Activated CD4-positive, alpha-beta T cell treated with anti-CD3 and anti-CD28 coated beads for 36 hours (primary cell): ENCODE measurements at regions of chr2 and their contacts with region 1.

Region 1: DNA sequence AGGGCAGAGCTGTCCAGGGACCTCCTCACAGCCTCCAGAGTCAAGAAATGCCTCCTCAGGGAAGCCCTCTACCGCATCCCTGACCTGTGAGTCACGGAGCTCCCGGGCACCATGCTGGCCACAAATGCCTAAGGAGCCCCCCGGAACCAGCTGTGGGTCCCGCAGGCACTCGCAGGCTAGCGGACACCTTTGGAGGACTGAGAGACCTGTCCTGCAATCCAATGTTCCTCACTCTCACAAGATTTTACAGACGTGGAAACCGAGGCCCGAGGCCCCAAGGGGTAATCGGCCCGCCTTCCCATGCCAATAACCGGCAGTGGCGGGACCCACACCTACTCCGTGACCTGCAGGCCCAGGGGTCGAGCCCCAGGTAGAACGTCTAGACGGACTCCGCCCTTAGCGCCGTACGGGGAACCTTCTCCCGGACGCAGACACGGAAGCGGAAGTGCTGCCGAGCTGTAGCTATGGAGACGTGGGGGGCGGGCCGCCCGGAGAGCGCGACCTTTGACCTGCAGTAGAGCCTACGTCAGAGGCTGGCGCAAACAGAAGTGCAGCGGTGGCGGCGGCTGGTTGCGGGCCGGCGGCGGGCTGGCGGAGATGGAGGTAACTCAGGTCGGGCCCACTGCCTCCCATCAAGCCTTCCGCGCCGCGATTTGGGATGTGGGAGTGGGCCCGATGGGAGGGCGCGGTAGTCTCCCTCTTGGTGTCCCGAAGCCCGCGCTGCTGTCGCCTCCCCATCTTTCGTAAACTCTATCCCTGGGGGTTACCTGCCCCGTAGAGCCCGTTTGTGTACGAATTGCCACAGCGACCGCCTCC is at the start of gene GCC2:
- DNase-seq: peak; percentile 98
- ATAC-seq: peak; percentile 97
- H3K4me3 Mint-ChIP-seq: peak within 1 kb of the TSS; percentile 98
- H3K27ac Mint-ChIP-seq: peak within 1 kb of the TSS; percentile 94
- H3K4me1 Mint-ChIP-seq: peaks cover 33% of the 10 kb centered on the region
- H3K27me3 Mint-ChIP-seq: no peaks in the 10 kb centered on the region
- total RNA-seq, gene GCC2: 47.8 to 51.3 TPM

Region 2: DNA sequence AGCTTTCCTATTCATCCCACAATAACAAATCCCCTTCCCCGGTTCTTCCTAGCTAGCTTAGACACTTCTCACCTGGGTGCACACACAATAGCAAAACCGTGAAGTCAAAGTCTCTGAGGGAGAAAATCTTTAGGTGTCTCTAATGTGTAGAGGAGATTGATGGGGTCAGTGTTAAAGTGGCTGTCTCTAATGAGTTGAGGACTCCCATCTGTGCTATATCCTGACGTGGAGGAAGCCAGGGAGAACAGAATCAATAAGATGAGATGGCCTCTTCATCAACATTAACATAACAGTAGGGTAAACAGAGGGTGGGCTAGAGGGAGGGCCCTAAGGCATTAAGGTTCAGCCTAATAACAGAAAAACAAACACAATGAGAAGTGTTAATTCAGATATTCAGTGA is 342.2 kb before region 1 on chr2:
- CTCF ChIA-PET with region 1: no interaction called
- POLR2A ChIA-PET with region 1: no interaction called
- intact Hi-C with region 1: no loop called
- DNase-seq: no peak
- ATAC-seq: no peak
- H3K4me3 Mint-ChIP-seq: no peak overlapping the region
- H3K27ac Mint-ChIP-seq: no peak overlapping the region
- H3K4me1 Mint-ChIP-seq: no peaks in the 10 kb centered on the region
- H3K27me3 Mint-ChIP-seq: peaks cover 3% of the 10 kb centered on the region

Region 3: DNA sequence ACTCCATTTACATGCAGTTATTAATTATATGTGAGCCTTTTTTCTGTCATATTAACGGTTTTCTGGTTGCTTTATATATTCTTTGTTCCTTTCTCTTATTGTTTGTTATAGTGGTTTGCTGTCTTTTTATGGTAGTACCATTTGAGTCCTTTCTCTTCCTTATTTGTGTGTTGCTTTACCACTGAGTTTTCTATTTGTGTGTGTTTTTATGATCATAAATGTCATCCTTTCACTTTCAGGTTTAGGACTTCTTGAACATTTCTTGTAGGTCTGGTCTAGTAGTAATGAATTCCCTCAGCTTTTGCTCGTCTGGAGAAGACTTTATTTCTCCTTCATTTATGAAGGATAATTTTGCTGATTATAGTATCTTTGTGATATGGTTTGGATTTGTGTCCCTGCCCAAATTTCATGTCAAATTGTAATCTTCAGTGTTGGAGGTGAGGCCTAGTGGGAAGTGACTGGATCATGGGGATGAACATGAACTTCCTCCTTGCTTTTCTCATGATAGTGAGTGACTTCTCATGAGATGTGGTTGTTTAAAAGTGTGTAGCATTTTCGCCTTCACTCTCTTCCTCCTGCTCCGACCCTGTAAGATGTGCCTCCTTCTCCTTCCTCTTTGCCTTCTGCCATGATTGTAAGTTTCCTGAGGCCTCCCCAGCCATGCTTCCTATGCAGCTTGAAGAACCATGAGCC is 11.6 kb after region 1 on chr2:
- CTCF ChIA-PET with region 1: interaction called, 3 read pairs
- POLR2A ChIA-PET with region 1: interaction called, 10 read pairs
- intact Hi-C with region 1: no loop called
- DNase-seq: no peak
- ATAC-seq: peak; percentile 42
- H3K4me3 Mint-ChIP-seq: no peak overlapping the region
- H3K27ac Mint-ChIP-seq: peak overlapping the region; percentile 71
- H3K4me1 Mint-ChIP-seq: peaks cover 47% of the 10 kb centered on the region
- H3K27me3 Mint-ChIP-seq: no peaks in the 10 kb centered on the region

Region 4: DNA sequence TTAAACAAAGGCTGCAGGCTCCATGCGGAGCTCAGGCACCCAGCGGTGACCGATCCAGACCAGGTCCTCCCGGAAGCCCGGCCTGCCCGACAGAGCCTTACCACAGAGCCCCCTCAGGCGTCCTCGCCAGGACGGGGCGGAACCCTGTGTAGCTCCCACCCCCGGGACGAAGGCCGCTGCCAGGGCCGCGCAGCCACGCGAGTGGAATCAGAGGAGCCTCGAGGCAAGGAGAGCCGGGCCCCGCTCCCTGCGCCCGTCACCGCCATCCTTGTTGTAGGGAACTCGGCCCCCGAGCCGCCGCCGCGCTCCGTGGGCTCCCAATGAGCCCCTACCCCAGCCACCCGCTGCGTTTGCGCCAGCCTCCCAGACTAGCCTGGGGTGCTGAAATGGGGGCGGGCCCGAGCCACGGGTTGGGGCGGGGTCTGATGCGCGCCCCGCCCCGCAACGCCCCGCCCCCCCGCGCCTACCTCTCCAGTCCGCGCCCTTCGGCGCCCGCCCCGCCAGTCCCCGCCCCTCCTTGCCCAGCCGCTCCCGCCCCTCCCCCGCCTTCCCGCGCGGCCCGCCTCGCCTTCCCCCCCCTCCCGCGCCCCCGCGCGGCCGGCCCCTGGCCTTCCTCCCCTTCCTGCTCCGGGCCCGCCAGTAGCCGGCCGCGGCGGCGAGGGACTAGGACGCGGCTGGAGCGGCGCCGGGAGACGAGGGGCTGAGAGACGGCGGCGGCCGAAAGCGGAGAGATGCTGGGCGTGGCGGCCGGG is 85.1 kb after region 1 on chr2 and contains the start of gene LIMS1:
- CTCF ChIA-PET with region 1: interaction called, 3 read pairs
- POLR2A ChIA-PET with region 1: interaction called, 5 read pairs
- intact Hi-C with region 1: loop called (anchors 1 kb)
- DNase-seq: peak; percentile 95
- ATAC-seq: peak; percentile 89
- H3K4me3 Mint-ChIP-seq: peak within 1 kb of the TSS; percentile 89
- H3K27ac Mint-ChIP-seq: peak within 1 kb of the TSS; percentile 89
- H3K4me1 Mint-ChIP-seq: peaks cover 44% of the 10 kb centered on the region
- H3K27me3 Mint-ChIP-seq: no peaks in the 10 kb centered on the region
- total RNA-seq, gene LIMS1: 47.5 to 70.3 TPM

Region 5: GRCh38 chr2:108621087-108621559 is 172.2 kb after region 1 on chr2:
- CTCF ChIA-PET with region 1: no interaction called
- POLR2A ChIA-PET with region 1: interaction called, 5 read pairs
- intact Hi-C with region 1: loop called in 1 of 2 experiments (anchors 5 kb)
- DNase-seq: peak; percentile 87
- ATAC-seq: peak; percentile 95
- H3K4me3 Mint-ChIP-seq: peak overlapping the region; percentile 76
- H3K27ac Mint-ChIP-seq: peak overlapping the region; percentile 91
- H3K4me1 Mint-ChIP-seq: peaks cover 85% of the 10 kb centered on the region
- H3K27me3 Mint-ChIP-seq: no peaks in the 10 kb centered on the region

Region 6: DNA sequence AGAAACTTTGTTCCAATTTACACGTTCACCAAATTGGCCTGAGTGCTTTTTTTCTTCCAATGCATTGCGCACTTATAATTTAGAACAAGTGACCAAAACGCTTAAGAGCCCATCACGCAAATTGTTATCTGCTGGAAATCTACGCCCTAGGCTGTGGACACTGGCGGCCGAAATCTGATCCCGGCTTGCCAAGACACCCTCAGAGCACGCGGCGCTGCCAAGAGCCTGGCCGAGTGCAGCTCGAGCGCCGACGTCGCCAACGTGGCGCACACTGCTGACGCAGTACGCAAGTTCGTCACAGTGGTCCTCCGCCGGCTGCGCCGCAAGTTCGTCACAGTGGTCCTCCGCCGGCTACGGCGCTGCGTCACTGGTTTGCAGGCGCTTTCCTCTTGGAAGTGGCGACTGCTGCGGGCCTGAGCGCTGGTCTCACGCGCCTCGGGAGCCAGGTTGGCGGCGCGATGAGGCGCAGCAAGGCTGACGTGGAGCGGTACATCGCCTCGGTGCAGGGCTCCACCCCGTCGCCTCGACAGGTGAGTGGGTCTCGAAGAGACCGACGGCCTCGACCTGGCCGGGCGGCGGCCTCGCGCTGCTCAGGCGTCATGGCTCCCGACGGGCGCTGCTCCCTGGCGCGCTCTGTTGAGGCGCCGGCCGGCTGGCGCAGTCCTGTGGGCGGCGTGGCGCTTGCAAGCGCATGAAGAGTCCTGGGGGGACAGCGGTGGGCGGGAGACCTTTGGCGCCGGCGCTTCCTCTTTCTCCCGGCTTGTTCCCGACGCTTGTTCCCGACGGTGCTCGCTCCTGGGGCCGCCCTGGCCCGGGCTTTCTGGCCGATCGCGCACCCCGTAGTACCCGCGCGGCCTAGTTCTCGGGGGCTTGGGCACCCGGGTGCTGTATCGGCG is 270.5 kb after region 1 on chr2 and contains the start of gene RANBP2:
- CTCF ChIA-PET with region 1: no interaction called
- POLR2A ChIA-PET with region 1: no interaction called
- intact Hi-C with region 1: loop called in 1 of 2 experiments (anchors 1 kb)
- DNase-seq: peak; percentile 97
- ATAC-seq: peak; percentile 97
- H3K4me3 Mint-ChIP-seq: peak within 1 kb of the TSS; percentile 93
- H3K27ac Mint-ChIP-seq: peak within 1 kb of the TSS; percentile 98
- H3K4me1 Mint-ChIP-seq: peaks cover 15% of the 10 kb centered on the region
- H3K27me3 Mint-ChIP-seq: no peaks in the 10 kb centered on the region
- total RNA-seq, gene RANBP2: 68.1 to 77.1 TPM

Region 7: DNA sequence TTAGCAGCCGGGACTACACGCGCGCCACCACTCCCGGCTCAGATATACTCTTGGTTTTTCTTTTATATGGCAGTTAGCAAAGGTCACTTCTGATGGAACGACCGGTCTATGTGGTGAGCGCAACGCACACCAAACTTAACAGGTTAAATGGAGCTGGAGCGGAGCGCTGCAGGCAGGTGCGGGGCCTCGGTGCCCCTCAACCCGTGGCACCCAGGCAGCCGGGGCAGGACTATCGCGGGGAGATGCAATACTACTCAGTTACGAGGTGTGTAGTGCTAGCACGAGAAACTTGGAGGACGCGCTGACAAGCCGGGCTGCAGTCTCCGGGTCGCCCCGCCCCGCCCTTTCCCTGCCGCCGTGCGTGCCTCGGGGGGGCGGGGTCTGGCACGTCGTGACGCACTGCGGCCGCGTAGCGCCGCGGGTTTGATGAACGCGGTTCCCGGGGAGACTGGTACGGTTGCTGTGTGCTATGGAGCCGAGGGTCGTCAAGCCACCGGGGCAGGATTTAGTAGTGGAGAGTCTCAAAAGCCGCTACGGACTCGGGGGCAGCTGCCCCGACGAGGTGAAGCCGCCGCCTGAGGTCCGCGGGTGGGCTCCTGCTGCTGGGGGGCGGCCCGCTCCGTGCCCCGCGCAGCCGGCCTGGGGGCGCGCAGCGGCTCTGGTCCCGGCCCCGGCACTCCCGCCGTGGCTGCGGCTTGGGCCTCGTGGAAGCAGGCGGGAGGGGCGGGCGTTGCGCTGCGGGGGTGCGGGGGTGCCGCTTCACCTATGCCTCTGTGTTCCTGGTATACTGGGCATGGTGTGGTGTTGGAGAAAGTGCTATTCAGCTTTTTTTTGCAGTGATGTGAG is 337.7 kb after region 1 on chr2 and contains the start of gene CCDC138:
- CTCF ChIA-PET with region 1: no interaction called
- POLR2A ChIA-PET with region 1: no interaction called
- intact Hi-C with region 1: loop called in 1 of 2 experiments (anchors 2 kb)
- DNase-seq: peak; percentile 96
- ATAC-seq: peak; percentile 98
- H3K4me3 Mint-ChIP-seq: peak within 1 kb of the TSS; percentile 76
- H3K27ac Mint-ChIP-seq: peak within 1 kb of the TSS; percentile 95
- H3K4me1 Mint-ChIP-seq: peaks cover 14% of the 10 kb centered on the region
- H3K27me3 Mint-ChIP-seq: no peaks in the 10 kb centered on the region
- total RNA-seq, gene CCDC138: 14.3 to 15.3 TPM

Region 8: GRCh38 chr2:109613922-109614714 is 1165.2 kb after region 1 on chr2 and contains the starts of genes SEPTIN10 and SOWAHC:
- CTCF ChIA-PET with region 1: no interaction called
- POLR2A ChIA-PET with region 1: no interaction called
- intact Hi-C with region 1: loop called in 1 of 2 experiments (anchors 5 kb)
- DNase-seq: peak; percentile 92
- ATAC-seq: peak; percentile 91
- H3K4me3 Mint-ChIP-seq: peak within 1 kb of the TSS; percentile 80
- H3K27ac Mint-ChIP-seq: peak within 1 kb of the TSS; percentile 37
- H3K4me1 Mint-ChIP-seq: peaks cover 16% of the 10 kb centered on the region
- H3K27me3 Mint-ChIP-seq: peaks cover 54% of the 10 kb centered on the region
- total RNA-seq, gene SEPTIN10: 5.8 to 6.3 TPM
- total RNA-seq, gene SOWAHC: 0.63 to 0.98 TPM